Activated CD4-positive, alpha-beta memory T cell treated with anti-CD3 and anti-CD28 coated beads, Interleukin-2, amount 10 ng/mL, durations not matched to agents 7 days and 5 days (primary cell): ENCODE measurements at regions of chr11 and their contacts with region 1.

Region 1: DNA sequence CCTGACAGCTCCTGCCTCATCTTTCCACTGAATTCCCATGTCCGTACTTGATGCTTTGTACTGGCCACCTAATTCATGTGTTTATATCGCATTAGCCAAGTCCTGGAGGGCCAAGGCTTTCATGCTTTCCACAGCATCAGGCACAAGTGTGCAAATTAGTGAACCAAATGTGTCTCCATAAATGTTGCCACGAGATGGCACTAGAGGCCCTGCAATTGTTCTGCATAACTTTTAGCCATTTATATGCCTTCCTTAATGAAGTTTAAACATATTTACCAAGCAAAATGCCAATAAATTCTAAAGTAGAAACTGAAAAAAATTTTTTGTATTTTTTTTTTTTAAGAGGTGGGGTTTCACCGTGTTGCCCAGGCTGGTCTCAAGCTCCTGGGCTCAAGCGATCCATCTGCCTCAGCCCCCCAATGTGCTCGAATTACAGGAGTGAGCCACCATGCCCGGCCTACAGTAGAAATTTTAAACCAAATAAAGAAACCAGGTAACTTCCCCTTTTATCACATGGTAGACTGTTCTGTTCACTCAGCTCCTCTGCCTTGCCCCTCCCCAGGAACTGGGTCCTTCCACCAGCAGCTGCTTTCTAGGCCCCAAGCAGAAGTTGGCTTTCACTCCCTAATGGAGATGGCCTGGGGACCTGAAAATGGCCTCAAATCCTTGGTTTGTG is 20.8 kb upstream of the IL18BP start:
- DNase-seq: peak; percentile 67
- H3K4me3 Mint-ChIP-seq: no peak overlapping the region
- H3K27ac Mint-ChIP-seq: peak overlapping the region; percentile 37
- H3K4me1 Mint-ChIP-seq: no peaks in the 10 kb centered on the region
- H3K27me3 Mint-ChIP-seq: no peaks in the 10 kb centered on the region

Region 2: DNA sequence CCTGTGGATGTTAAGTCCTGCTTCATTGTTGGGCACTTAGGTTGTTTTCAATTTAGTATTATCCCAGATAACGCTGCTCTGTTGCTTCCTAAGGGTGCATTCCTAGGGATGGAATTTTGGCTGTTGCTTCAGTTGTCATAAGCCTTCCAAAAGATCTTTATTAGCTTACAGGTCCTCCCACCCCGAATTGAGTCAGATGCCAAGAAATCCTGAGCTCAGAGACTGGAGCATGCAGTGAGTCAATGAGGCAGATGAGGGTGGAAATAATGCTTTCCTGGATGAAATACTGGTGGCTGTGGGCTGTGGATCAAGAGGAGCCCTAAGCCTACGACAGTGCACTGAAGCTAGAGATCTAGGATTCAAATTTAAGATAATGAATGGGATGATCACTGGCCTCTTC is 10.2 kb after region 1 on chr11:
- CTCF ChIA-PET with region 1: interaction called, 13 read pairs
- POLR2A ChIA-PET with region 1: no interaction called
- DNase-seq: no peak
- H3K4me3 Mint-ChIP-seq: no peak overlapping the region
- H3K27ac Mint-ChIP-seq: no peak overlapping the region
- H3K4me1 Mint-ChIP-seq: peaks cover 20% of the 10 kb centered on the region
- H3K27me3 Mint-ChIP-seq: no peaks in the 10 kb centered on the region

Region 3: GRCh38 chr11:72015511-72016171 is 37.8 kb after region 1 on chr11:
- CTCF ChIA-PET with region 1: interaction called, 18 read pairs
- POLR2A ChIA-PET with region 1: no interaction called
- DNase-seq: no peak
- H3K4me3 Mint-ChIP-seq: no peak overlapping the region
- H3K27ac Mint-ChIP-seq: no peak overlapping the region
- H3K4me1 Mint-ChIP-seq: no peaks in the 10 kb centered on the region
- H3K27me3 Mint-ChIP-seq: no peaks in the 10 kb centered on the region

Region 4: GRCh38 chr11:72030472-72031045 is 52.7 kb after region 1 on chr11:
- CTCF ChIA-PET with region 1: interaction called, 27 read pairs
- POLR2A ChIA-PET with region 1: interaction called, 3 read pairs
- DNase-seq: no peak
- H3K4me3 Mint-ChIP-seq: no peak overlapping the region
- H3K27ac Mint-ChIP-seq: no peak overlapping the region
- H3K4me1 Mint-ChIP-seq: peaks cover 13% of the 10 kb centered on the region
- H3K27me3 Mint-ChIP-seq: no peaks in the 10 kb centered on the region

Region 5: DNA sequence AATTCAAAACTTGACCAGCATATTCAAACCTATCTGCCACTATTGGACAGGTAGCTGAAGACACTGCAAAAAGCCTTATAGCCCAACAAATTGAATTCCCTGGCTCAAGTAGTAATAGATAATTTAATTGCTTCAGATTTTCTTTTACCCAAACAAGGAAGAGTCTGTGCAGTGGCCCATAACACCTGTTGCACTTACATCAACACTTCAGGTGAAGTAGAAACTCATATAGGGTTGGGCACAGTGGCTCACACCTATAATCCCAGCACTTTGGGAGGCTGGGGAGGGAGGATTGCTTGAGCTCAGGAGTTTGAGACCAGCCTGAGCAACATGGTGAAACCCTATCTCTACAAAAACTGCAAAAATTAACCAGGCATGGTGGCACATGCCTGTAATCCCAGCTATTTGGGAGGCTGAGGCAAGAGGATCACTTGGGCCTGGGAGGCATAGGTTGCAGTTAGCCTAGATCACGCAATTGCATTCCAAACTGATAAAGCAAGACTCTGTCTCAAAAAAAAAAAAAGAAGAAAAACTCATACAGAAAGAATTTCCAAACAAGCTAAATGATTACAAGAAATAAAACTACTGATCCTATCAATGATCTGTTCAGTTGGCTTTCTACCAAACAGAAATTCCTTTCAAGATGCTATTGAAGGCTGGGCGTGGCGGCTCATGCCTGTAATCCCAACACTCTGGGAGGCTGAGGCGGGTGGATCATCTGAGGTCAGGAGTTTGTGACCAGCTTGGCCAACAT is 167.1 kb after region 1 on chr11:
- CTCF ChIA-PET with region 1: interaction called, 26 read pairs
- POLR2A ChIA-PET with region 1: no interaction called
- DNase-seq: no peak
- H3K4me3 Mint-ChIP-seq: no peak overlapping the region
- H3K27ac Mint-ChIP-seq: no peak overlapping the region
- H3K4me1 Mint-ChIP-seq: peaks cover 25% of the 10 kb centered on the region
- H3K27me3 Mint-ChIP-seq: peaks cover 14% of the 10 kb centered on the region

Region 6: DNA sequence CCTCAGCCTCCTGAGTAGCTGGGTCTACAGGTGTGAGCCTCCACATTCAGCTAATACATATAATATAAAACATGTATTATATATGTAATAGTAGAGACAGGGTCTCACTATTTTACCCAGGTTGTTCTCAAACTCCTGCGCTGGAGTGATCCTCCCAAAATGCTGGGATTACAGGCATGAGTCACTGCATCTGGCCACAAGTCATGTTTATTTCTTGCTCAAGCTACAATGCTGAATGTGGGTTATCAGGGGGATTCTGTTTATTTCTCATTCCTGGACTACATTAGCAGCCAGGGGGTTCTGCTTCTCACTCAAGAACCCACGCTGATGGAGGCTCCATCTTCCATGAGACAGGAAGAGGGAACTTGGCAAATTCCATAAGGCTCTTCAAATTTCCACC is 182.4 kb after region 1 on chr11:
- CTCF ChIA-PET with region 1: no interaction called
- POLR2A ChIA-PET with region 1: no interaction called
- DNase-seq: no peak
- H3K4me3 Mint-ChIP-seq: no peak overlapping the region
- H3K27ac Mint-ChIP-seq: no peak overlapping the region
- H3K4me1 Mint-ChIP-seq: no peaks in the 10 kb centered on the region
- H3K27me3 Mint-ChIP-seq: peaks cover 23% of the 10 kb centered on the region

Region 7: GRCh38 chr11:72173291-72173690 is 195.4 kb after region 1 on chr11:
- CTCF ChIA-PET with region 1: no interaction called
- POLR2A ChIA-PET with region 1: no interaction called
- DNase-seq: no peak
- H3K4me3 Mint-ChIP-seq: no peak overlapping the region
- H3K27ac Mint-ChIP-seq: no peak overlapping the region
- H3K4me1 Mint-ChIP-seq: peaks cover 4% of the 10 kb centered on the region
- H3K27me3 Mint-ChIP-seq: peaks cover 3% of the 10 kb centered on the region